Colonic mucosa (tissue), 4 donors: ENCODE measurements at regions of chr4 and their contacts with region 1.

Region 1: DNA sequence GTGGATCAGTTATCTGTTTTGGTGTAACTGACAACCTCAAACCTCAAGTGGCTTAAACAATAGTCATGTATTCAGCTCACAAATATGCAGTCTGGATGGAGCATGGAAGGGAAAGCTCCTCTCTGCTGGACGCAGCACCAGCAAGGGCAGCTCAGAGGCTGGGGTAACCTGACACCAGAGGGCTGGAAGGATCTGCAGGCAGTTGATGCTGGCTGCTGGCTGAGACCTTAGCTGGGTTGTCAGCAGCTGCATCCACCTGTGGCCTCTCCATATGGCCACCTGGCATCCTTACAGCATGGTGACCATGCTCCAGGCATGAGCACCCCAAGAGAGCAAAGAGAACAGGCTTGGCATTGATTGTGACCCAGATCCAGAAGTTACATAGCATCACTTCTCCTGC is 46.7 kb downstream of the ENPP6 start:
- DNase-seq: no peak
- H3K4me3 ChIP-seq: no peak overlapping the region
- H3K27ac ChIP-seq: no peak overlapping the region
- H3K4me1 ChIP-seq: no peaks in the 10 kb centered on the region
- H3K27me3 ChIP-seq: peaks cover 4% of the 10 kb centered on the region
- CTCF ChIP-seq: no peak

Region 2: DNA sequence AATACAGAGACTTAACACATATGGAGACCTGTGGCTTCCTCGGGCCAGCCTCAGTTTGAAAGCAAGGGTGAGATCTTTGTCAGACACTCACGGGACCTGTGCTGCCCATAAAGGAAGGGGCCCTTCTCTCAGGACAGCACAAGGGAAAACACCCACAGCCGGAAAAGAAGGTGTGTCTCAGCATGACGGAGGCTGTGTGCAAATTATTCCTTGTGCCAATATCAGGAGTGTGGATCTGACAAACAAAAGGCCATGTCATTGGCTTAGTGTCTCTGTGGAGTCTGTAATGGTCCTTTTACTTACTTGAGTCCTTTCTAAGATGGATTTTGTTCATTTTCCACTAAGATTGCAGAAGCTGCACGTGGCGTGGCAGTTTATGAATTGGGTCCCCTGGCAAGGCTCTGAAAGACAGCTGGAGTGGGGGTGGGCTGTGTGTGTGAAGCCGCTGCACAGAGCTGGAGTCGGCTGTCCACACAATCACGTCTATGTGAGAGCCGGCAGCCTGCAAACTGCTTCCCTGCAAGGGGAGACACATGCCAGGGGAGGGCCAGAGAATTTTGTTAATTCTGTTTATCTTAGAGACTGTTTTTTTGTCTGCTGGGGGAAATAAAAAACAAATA is 44.8 kb after region 1 on chr4:
- intact Hi-C with region 1: no loop called
- DNase-seq: no peak
- H3K4me3 ChIP-seq: no peak overlapping the region
- H3K27ac ChIP-seq: no peak overlapping the region
- H3K4me1 ChIP-seq: no peaks in the 10 kb centered on the region
- H3K27me3 ChIP-seq: no peaks in the 10 kb centered on the region
- CTCF ChIP-seq: no peak

Region 3: GRCh38 chr4:184248216-184248615 is 77.2 kb after region 1 on chr4:
- intact Hi-C with region 1: loop called (anchors 10 kb)
- DNase-seq: no peak
- H3K4me3 ChIP-seq: no peak overlapping the region
- H3K27ac ChIP-seq: no peak overlapping the region
- H3K4me1 ChIP-seq: no peaks in the 10 kb centered on the region
- H3K27me3 ChIP-seq: no peaks in the 10 kb centered on the region
- CTCF ChIP-seq: no peak

Region 4: DNA sequence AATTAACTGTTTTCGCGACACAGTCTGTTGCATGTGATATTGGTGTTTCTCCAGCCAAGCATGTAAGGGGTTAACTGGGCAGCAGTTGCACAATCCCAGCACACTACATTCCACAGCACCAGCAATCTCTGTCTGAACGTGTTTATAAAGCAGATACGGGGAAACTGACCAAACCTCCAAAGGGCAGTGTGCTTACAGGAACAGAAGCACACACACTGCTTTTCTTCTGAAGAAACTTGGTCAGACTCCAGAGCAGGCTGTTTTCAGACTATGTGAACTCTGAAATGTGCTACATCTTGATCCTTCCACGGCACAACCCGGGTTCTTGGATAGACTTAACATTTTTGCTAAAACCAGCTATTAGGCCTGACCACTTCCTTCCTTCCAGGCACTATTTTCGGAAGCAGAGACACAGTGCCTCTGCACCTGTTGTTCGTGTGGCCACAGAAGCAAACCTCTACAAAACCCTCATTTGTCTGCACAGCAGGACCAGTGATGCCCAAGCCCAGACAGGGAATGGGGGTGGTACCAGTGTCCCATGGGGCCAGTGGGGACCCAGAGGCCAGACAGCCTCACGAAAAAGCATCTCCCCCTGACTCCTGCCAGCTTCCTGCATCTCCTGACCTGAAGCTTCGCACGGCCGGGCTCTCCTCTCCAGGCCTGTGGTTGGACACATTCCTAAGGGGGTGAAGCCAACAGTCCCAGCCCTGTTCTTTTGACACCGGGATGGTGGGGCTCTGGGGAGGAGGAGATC is 213.2 kb after region 1 on chr4:
- intact Hi-C with region 1: no loop called
- DNase-seq: peak; percentile 63
- H3K4me3 ChIP-seq: no peak overlapping the region
- H3K27ac ChIP-seq: peak overlapping the region; percentile 92
- H3K4me1 ChIP-seq: peaks cover 28% of the 10 kb centered on the region
- H3K27me3 ChIP-seq: no peaks in the 10 kb centered on the region
- CTCF ChIP-seq: no peak